Caco-2 (cell line): ENCODE measurements at regions of chr20 and their contacts with region 1.

Region 1: GRCh38 chr20:32743237-32744112 is at the start of gene COMMD7:
- DNase-seq: peak; percentile 89 to 90
- H3K4me3 ChIP-seq: peak within 1 kb of the TSS; percentile 88
- H3K4me3 Mint-ChIP-seq: peak within 1 kb of the TSS; percentile 89
- H3K27ac Mint-ChIP-seq: peak within 1 kb of the TSS; percentile 87
- H3K4me1 ChIP-seq: peaks cover 39% of the 10 kb centered on the region
- H3K4me1 Mint-ChIP-seq: peaks cover 20% of the 10 kb centered on the region
- H3K27me3 ChIP-seq: no peaks in the 10 kb centered on the region
- H3K27me3 Mint-ChIP-seq: no peaks in the 10 kb centered on the region
- CTCF ChIP-seq: no peak
- total RNA-seq, gene COMMD7: 142 and 160 TPM in 2 replicates

Region 2: DNA sequence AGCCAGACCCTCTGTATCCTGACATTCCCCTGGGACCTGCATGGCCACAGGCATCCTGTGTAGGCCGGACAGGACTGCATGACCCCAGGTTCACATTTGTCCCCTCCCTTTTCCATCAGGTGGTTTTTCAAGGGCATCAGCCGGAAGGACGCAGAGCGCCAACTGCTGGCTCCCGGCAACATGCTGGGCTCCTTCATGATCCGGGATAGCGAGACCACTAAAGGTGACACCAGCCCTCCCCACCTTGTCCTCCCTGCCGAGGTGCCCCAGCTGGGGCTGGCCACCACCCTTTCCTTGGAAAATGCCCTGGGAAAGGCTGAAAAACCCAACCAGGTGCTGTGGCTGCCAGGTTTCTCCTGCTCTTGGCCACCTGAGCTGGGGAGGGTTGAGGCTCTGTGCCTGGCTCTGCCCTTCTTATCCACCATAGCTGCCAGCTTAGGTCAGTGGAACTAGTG is 663.8 kb before region 1 on chr20:
- CTCF ChIA-PET with region 1: no interaction called
- POLR2A ChIA-PET with region 1: no interaction called
- intact Hi-C with region 1: no loop called
- DNase-seq: no peak
- H3K4me3 ChIP-seq: no peak overlapping the region
- H3K4me3 Mint-ChIP-seq: no peak overlapping the region
- H3K27ac Mint-ChIP-seq: no peak overlapping the region
- H3K4me1 ChIP-seq: no peaks in the 10 kb centered on the region
- H3K4me1 Mint-ChIP-seq: no peaks in the 10 kb centered on the region
- H3K27me3 ChIP-seq: peaks cover 2% of the 10 kb centered on the region; the same call in 1 of the 2 replicates
- H3K27me3 Mint-ChIP-seq: peaks cover 27% of the 10 kb centered on the region
- CTCF ChIP-seq: no peak

Region 3: DNA sequence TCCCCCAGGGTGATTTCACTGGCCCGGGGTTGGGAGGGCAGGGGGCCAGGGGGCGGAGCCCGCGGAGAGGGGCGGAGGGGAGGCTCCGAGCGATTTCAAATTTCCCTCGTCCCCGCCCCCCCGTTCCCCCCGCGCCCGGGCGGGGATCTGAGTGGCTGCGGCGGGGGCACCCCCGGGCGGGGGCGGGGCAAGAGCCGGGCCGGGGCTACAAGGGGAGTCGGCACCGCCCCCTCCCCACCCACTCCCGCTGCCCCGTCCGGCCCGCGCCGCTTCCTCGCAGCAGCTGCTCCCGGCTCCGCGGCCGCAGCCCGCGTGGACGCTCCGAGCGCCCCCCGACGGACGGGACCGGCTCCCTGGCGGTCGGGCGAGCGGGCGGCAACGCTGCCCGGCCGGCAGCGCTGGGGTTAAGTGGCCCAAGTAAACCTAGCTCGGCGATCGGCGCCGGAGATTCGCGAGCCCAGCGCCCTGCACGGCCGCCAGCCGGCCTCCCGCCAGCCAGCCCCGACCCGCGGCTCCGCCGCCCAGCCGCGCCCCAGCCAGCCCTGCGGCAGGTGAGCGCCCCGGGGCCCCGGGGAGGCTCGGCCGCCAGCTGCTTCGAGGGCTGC is 18.8 kb after region 1 on chr20 and contains the start of gene DNMT3B:
- CTCF ChIA-PET with region 1: interaction called, 19 read pairs
- POLR2A ChIA-PET with region 1: interaction called, 51 read pairs
- intact Hi-C with region 1: loop called (anchors 1 kb)
- DNase-seq: peak; percentile 97 to 99
- H3K4me3 ChIP-seq: peak within 1 kb of the TSS; percentile 87
- H3K4me3 Mint-ChIP-seq: peak within 1 kb of the TSS; percentile 100
- H3K27ac Mint-ChIP-seq: peak within 1 kb of the TSS; percentile 93
- H3K4me1 ChIP-seq: peaks cover 25% of the 10 kb centered on the region
- H3K4me1 Mint-ChIP-seq: peaks cover 33% of the 10 kb centered on the region
- H3K27me3 ChIP-seq: no peaks in the 10 kb centered on the region
- H3K27me3 Mint-ChIP-seq: no peaks in the 10 kb centered on the region
- CTCF ChIP-seq: peak in 1 of 2 experiments; percentile 31
- total RNA-seq, gene DNMT3B: 95.5 and 105 TPM in 2 replicates